Psoas muscle (tissue), 8 donors: ENCODE measurements at regions of chr16 and their contacts with region 1.

Region 1: DNA sequence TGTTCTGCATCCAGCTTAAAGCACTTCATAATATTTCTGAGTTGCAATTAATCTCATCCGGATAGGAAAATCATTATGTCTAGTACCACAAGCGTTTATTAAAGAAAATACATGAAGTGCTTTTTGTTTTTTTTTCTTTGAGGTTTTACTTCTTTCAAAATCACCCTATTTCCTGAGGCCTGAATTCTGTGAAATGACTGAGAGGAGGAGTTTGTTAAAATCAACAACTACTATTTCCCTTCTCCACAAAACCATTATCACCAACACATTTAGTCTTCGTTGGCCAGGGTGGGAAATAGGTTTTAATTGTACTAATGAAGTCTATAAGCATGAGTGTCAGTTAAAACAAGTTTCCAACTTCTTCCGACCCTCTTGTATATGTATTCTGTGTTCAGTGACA is 50.7 kb upstream of the ADCY7 start:
- DNase-seq: no peak
- ATAC-seq: no peak
- H3K4me3 ChIP-seq: no peak overlapping the region
- H3K27ac ChIP-seq: no peak overlapping the region
- H3K4me1 ChIP-seq: peaks cover 4% of the 10 kb centered on the region
- H3K27me3 ChIP-seq: no peaks in the 10 kb centered on the region
- CTCF ChIP-seq: no peak

Region 2: GRCh38 chr16:50195276-50195675 is 20.4 kb before region 1 on chr16:
- intact Hi-C with region 1: no loop called
- DNase-seq: no peak
- ATAC-seq: no peak
- H3K4me3 ChIP-seq: no peak overlapping the region
- H3K27ac ChIP-seq: no peak overlapping the region
- H3K4me1 ChIP-seq: peaks cover 21% of the 10 kb centered on the region
- H3K27me3 ChIP-seq: no peaks in the 10 kb centered on the region
- CTCF ChIP-seq: no peak

Region 3: DNA sequence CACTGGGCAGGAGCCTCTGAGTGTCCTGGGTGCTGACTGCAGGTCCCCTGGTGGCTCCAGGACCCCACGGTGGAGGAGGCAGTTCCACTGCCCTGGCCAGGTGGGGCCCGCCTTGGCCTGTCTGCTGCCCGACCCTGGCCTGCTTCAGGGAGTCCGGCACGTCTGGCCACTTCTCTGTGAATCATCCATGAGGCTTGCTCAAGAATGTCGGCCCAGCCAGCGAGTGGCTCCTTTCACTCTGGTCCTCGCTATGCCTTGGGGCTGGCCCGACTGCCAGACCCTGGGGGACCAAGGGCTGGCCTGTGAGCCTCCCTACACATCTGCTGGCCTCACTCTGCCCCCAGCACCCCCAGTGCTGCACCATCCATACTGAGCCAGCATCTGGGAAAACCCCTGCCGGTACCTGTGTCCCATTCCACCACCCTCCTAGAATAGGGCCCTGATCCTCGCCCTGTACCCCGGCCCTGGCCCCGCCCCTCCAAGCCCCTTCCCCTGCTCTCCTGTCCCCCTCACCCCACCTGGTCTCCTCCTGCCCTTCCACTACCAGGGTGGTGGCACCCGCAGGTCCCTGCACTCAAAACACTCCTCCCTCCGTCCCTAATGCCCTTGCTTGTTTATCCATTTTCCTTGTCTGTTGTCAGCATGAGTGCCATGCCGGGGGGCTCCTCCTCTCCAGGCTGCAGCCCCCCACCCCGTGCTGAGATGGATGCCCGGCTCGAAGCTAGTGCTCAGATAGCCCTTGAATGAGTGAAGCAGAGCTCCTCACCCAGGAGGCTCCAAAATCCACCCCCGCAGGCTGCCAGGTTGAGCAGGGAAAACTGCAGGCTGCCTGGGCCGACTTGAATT is 86.2 kb after region 1 on chr16:
- intact Hi-C with region 1: no loop called
- DNase-seq: peak; percentile 66 to 77
- ATAC-seq: peak in 3 of 4 donors; percentile 18 to 50 (median 22)
- H3K4me3 ChIP-seq: no peak overlapping the region
- H3K27ac ChIP-seq: no peak overlapping the region
- H3K4me1 ChIP-seq: no peaks in the 10 kb centered on the region
- H3K27me3 ChIP-seq: no peaks in the 10 kb centered on the region
- CTCF ChIP-seq: no peak

Region 4: DNA sequence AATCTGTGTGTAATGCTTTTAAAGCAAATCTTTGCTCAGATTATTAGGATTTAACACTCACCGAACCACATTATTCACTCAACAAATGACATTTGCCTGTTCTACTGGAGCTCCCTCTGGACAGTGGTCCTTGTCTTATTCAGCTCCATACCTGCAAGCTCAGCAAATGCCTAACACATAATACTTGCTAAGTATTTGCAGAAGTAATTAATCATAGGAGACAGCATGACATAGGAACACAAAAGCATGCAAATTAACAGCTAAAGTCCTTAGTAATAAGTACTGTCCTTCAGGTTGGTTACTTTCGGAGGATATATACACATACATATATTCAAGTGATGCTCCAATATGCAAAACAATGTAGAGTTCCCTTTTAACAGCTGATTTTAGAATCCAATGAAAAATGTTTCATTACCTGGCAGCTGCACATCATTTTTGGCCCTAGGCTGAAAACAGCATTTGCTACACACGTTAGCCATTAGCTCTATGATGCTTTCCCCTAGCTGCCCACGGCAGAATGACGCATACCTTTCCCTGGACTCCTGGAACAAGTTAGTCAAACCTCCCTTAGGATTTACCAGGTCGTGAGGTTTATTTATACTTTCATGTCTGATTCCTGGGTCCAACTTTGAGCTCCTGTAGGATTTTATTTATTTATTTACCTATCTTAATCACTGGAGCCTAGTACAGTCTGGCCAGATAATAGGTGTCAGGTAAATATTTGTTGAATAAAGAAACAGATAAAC is 144.5 kb after region 1 on chr16:
- intact Hi-C with region 1: loop called (anchors 5 to 10 kb)
- DNase-seq: no peak
- ATAC-seq: peak; percentile 58 to 83 (median 78)
- H3K4me3 ChIP-seq: no peak overlapping the region
- H3K27ac ChIP-seq: peak overlapping the region; percentile 72
- H3K4me1 ChIP-seq: peaks cover 23% of the 10 kb centered on the region
- H3K27me3 ChIP-seq: no peaks in the 10 kb centered on the region
- CTCF ChIP-seq: no peak